Transverse colon (tissue), 4 donors: ENCODE measurements at regions of chr1 and their contacts with region 1.

Region 1: DNA sequence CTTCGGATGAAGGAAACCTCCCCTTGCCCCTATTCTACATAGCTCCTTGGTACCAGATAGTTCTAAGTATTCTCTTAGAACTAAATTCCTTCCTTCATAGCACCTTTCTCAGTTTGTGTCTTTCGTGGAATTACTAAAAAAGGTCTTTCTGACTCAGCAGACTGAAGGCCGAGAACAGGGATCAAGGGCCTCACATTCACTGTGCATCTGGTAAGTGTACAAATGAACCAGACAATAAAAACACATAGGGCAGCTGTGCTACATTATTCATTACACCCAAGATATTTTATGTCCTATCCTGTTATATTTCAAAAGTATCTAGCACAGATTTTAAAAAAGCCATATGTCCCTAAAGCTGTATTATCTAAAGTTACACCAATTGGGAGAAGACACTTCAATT is 62.9 kb upstream of the HP1BP3 start:
- DNase-seq: no peak
- H3K4me3 ChIP-seq: no peak overlapping the region
- H3K27ac ChIP-seq: no peak overlapping the region
- H3K4me1 ChIP-seq: no peaks in the 10 kb centered on the region
- H3K27me3 ChIP-seq: no peaks in the 10 kb centered on the region
- CTCF ChIP-seq: no peak
- EP300 ChIP-seq: no peak
- POLR2A ChIP-seq: no peak

Region 2: GRCh38 chr1:20903437-20903836 is 53.4 kb after region 1 on chr1:
- in situ Hi-C with region 1: no loop called
- intact Hi-C with region 1: loop called (anchors 2 kb)
- DNase-seq: no peak
- H3K4me3 ChIP-seq: no peak overlapping the region
- H3K27ac ChIP-seq: no peak overlapping the region
- H3K4me1 ChIP-seq: no peaks in the 10 kb centered on the region
- H3K27me3 ChIP-seq: no peaks in the 10 kb centered on the region
- CTCF ChIP-seq: no peak
- EP300 ChIP-seq: no peak
- POLR2A ChIP-seq: no peak